B cell (primary cell): ENCODE measurements at regions of chr3 and their contacts with region 1.

Region 1: DNA sequence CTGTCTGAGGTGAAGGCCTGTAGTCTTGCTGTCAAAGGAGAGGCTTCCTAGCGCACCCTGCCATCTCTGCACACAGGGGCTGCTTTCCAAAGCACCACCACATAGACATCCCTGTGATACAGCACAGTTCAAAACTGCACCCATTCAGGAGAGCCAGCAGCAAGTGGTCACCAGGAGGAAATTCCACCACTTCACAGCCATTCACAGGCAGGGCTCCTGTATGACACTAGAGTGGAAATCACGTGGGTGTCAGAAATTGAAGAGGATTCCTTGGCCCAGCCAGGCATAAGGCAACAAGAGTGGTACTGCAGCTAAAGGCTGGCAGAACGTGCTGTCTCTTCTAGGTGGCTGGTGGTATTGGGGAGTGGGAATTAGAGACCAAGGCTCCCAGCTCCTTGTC is 102.8 kb downstream of the RFTN1 start:
- DNase-seq: no peak
- ATAC-seq: no peak
- H3K4me3 ChIP-seq: no peak overlapping the region
- H3K4me3 Mint-ChIP-seq: no peak overlapping the region
- H3K27ac ChIP-seq: peak overlapping the region in 1 of 2 donors; percentile 54
- H3K27ac Mint-ChIP-seq: no peak overlapping the region
- H3K4me1 ChIP-seq: peaks cover 25 to 29% of the 10 kb centered on the region in 2 donors
- H3K4me1 Mint-ChIP-seq: peaks cover 38% of the 10 kb centered on the region
- H3K27me3 ChIP-seq: no peaks in the 10 kb centered on the region
- H3K27me3 Mint-ChIP-seq: no peaks in the 10 kb centered on the region
- CTCF ChIP-seq: no peak

Region 2: GRCh38 chr3:16112910-16113504 is 297.7 kb before region 1 on chr3:
- CTCF ChIA-PET with region 1: no interaction called
- POLR2A ChIA-PET with region 1: no interaction called
- intact Hi-C with region 1: no loop called
- DNase-seq: no peak
- ATAC-seq: no peak
- H3K4me3 ChIP-seq: no peak overlapping the region
- H3K4me3 Mint-ChIP-seq: no peak overlapping the region
- H3K27ac ChIP-seq: no peak overlapping the region
- H3K27ac Mint-ChIP-seq: no peak overlapping the region
- H3K4me1 ChIP-seq: no peaks in the 10 kb centered on the region
- H3K4me1 Mint-ChIP-seq: no peaks in the 10 kb centered on the region
- H3K27me3 ChIP-seq: no peaks in the 10 kb centered on the region
- H3K27me3 Mint-ChIP-seq: peaks cover 3% of the 10 kb centered on the region
- CTCF ChIP-seq: no peak

Region 3: DNA sequence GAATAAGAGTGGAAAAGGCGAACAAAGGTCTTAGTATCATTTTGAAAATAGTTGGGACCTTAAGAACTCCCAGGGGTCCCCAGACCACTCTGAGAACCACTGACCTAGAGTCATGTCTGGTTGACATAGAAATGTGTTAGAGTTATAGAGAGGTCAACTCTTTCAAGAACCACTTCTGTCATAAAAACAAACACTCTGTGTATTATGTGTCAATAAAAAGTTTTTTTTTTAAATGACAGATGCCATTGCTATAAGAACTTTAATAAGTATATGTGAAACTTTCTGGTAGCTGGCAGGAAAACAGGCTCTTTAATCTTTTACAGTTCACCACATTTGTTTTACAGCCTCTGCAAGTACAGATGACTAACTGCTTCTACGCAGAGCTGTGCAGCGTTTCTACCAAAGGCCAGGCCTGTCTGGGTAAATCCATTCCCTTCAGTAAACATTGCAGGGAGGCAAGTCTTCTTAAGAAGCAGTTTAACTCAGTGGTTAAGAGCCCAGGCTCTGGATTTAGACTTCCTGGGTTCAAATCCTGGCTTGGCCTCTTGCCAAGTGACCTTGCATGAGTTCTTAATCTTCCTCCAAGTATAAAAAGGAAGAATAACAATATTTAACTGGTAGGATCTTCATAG is 46.2 kb after region 1 on chr3:
- CTCF ChIA-PET with region 1: no interaction called
- POLR2A ChIA-PET with region 1: no interaction called
- intact Hi-C with region 1: loop called (anchors 5 kb)
- DNase-seq: no peak
- ATAC-seq: no peak
- H3K4me3 ChIP-seq: no peak overlapping the region
- H3K4me3 Mint-ChIP-seq: no peak overlapping the region
- H3K27ac ChIP-seq: no peak overlapping the region
- H3K27ac Mint-ChIP-seq: no peak overlapping the region
- H3K4me1 ChIP-seq: peaks cover 3 to 5% of the 10 kb centered on the region in 2 donors
- H3K4me1 Mint-ChIP-seq: peaks cover 45% of the 10 kb centered on the region
- H3K27me3 ChIP-seq: no peaks in the 10 kb centered on the region
- H3K27me3 Mint-ChIP-seq: no peaks in the 10 kb centered on the region
- CTCF ChIP-seq: no peak